Dendritic cell treated with granulocyte-macrophage colony-stimulating factor and Interleukin-4, amounts not matched to agents 40 ng/mL and 50 ng/mL, for 4 days (primary cell): ENCODE measurements at regions of chr5 and their contacts with region 1.

Region 1: DNA sequence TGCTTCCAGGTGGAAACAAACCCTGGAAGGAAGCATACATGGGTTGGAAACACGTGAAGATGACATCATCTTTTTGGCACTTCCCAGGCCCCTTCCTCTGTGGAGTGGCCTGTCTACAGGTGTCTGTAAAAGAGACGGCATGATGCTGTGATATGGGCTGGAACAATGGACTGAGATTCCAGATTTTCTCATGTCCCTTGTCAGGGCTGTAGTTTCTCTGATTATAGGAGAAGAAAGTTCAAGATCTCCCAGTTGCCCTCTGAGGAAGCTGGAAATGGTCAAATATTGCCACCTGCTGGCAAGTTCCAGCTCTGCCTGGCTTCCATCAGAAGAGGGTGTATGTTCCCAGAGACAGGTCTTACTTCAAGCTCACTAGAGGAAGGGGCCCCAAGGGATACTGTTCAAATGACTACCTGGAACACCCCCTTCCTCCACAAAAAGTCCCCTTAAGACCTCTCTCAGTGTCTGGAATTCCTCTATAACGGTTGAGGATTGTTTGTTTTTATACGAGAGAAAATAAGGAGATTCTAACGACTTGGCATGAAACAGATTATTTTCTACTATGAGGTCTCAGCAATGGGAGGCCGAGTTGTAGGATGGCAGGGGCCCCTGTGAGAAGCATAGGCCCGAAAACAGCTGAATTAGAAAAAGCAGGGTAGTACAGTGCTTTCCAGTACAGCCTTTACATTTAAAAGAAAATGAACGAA is 7.3 kb upstream of the ANXA6 start:
- H3K4me3 Mint-ChIP-seq: no peak overlapping the region
- H3K27ac Mint-ChIP-seq: no peak overlapping the region
- H3K4me1 Mint-ChIP-seq: no peaks in the 10 kb centered on the region
- H3K27me3 Mint-ChIP-seq: peaks cover 1% of the 10 kb centered on the region

Region 2: GRCh38 chr5:150946351-150946905 is 218.4 kb before region 1 on chr5:
- intact Hi-C with region 1: no loop called
- H3K4me3 Mint-ChIP-seq: peak overlapping the region; percentile 11
- H3K27ac Mint-ChIP-seq: no peak overlapping the region
- H3K4me1 Mint-ChIP-seq: no peaks in the 10 kb centered on the region
- H3K27me3 Mint-ChIP-seq: peaks cover 15% of the 10 kb centered on the region

Region 3: DNA sequence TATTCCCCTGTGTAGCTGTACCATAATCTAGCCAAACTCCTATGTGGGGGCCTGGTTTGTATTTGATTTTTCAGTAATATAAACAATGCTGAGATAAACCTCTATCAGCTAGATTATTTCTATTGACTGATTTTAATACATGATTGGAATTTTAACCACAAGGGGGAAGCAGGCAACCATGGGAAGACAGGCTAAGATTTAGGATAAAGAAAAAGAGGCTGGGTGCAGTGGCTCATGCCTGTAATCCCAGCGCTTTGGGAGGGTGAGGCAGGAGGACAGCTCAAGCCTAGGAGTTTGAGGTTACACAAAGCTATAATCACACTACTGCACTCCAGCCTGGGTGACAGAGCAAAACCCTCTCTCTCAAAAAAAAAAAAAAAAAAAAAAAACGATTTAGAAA is 162.6 kb before region 1 on chr5:
- intact Hi-C with region 1: loop called (anchors 1 kb)
- H3K4me3 Mint-ChIP-seq: no peak overlapping the region
- H3K27ac Mint-ChIP-seq: no peak overlapping the region
- H3K4me1 Mint-ChIP-seq: peaks cover 20% of the 10 kb centered on the region
- H3K27me3 Mint-ChIP-seq: peaks cover 1% of the 10 kb centered on the region

Region 4: DNA sequence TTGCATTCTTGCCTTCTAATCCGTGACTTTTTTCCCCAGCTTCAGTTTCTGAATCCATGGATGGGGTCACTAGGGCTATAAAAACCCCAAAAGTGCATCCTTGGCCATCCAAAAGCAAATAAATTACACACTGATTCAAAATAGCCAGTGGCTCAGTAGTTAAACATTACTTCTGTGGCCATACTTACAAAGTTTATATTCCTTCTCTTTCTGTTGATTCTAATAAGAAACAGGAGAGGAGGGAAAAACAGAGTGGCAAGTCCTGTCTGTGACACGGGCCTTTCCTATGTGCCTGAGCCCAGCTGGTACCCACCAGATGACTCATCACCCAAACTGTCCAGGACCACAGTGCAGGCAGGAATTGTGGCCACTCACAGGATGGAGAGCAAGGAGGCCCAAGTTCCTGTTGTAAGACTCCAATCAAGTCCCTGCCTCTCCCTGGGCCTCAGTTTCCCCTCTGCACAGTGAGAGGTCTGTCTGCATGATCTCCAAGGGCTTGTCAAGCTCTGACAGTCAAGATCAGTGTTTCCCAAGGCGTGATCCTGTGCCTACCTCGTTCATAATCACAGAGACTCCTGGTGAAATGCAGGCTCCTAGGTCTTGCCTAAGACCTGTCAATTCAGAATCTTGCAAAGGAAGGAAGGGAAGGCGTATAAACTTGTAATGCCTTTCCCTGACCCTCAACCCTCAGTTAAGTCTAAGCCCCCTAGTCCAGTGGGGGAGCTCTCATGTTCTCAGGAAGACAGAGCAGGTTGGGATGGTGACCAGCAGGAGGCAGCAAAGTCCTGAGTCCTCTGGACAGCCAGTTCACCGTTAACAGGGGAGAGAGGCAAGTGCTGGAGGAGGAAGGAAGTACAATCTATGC is 113.5 kb before region 1 on chr5:
- intact Hi-C with region 1: loop called (anchors 2 kb)
- H3K4me3 Mint-ChIP-seq: no peak overlapping the region
- H3K27ac Mint-ChIP-seq: peak overlapping the region; percentile 56
- H3K4me1 Mint-ChIP-seq: peaks cover 50% of the 10 kb centered on the region
- H3K27me3 Mint-ChIP-seq: no peaks in the 10 kb centered on the region

Region 5: DNA sequence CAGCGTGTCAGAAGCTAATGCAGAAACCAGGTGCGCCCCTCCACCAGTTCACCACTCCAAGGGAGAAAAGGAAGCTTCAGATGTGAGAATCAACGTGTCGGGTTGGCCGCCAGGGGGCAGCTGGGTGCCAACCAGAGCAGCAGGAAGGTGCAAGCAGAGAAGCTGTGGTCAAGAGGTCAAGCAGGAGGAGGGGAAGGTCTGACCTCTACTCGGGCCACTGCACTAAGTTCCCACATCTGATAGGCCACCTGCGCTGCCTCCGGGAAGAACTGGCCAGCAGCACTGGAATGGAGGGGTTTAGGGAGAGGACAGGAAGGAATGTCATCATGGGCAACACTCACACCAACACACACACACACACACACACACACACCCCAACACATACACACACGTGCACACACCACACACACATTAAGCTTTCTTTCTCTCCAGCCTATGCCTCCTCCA is 38.6 kb before region 1 on chr5:
- intact Hi-C with region 1: loop called (anchors 1 kb)
- H3K4me3 Mint-ChIP-seq: no peak overlapping the region
- H3K27ac Mint-ChIP-seq: no peak overlapping the region
- H3K4me1 Mint-ChIP-seq: peaks cover 25% of the 10 kb centered on the region
- H3K27me3 Mint-ChIP-seq: no peaks in the 10 kb centered on the region

Region 6: DNA sequence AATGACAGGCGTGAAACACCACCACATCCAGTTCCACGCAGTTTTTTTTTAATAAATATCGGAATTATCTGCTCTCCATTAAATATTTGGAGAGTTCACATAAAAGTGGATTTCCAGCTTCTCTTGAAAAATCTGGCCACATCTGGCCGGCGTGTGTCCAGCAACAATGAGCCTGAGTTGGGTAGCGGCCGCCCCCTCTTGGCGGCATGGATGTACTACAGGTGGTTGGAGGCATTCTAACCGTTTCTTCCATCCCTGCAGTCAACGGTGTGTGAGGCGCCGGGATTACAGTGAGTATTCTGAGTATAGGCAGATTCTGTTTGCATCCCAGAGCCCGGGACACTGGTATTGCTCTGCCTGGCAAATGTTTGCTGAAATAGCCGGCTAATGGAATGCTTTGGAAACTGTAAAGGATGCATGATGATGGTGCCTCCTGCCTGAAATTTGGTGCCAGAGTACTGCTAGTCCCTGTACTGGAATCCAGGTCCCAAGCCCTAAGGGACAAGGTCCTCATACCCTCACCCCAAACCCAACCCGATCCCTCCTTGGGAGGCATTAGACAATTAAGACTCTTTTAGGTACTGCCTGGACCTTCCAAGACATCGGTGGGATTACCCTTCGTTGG is 74.5 kb after region 1 on chr5:
- intact Hi-C with region 1: loop called (anchors 5 kb)
- H3K4me3 Mint-ChIP-seq: no peak overlapping the region
- H3K27ac Mint-ChIP-seq: no peak overlapping the region
- H3K4me1 Mint-ChIP-seq: peaks cover 38% of the 10 kb centered on the region
- H3K27me3 Mint-ChIP-seq: peaks cover 5% of the 10 kb centered on the region

Region 7: GRCh38 chr5:151288180-151288579 is 123.3 kb after region 1 on chr5:
- intact Hi-C with region 1: no loop called
- H3K4me3 Mint-ChIP-seq: no peak overlapping the region
- H3K27ac Mint-ChIP-seq: no peak overlapping the region
- H3K4me1 Mint-ChIP-seq: no peaks in the 10 kb centered on the region
- H3K27me3 Mint-ChIP-seq: peaks cover 15% of the 10 kb centered on the region

Region 8: DNA sequence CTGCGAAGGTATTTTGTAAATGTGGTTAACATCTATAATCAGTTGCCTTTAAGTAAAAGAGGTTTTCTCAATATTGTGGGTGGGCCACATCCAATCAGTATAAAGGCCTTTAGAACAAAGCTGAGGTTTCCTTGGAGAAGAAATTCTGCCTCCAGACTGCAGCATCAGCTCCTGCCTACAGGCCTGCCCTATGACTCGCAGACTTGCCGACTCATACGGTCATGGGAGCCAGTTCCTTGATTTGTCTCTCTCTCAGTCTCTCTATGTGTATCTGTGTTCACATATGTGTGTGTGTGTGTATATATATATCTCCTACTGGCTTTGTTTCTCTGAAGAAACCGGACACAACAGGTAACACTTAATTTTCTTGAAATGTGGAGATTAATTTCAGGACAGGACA is 327.9 kb after region 1 on chr5:
- intact Hi-C with region 1: no loop called
- H3K4me3 Mint-ChIP-seq: no peak overlapping the region
- H3K27ac Mint-ChIP-seq: peak overlapping the region; percentile 68
- H3K4me1 Mint-ChIP-seq: peaks cover 42% of the 10 kb centered on the region
- H3K27me3 Mint-ChIP-seq: no peaks in the 10 kb centered on the region